ENCODE measurements at regions of chr15 and their contacts with region 1.

Region 1: GRCh38 chr15:68783226-68784058 is 37.3 kb downstream of the ANP32A start:
- DNase-seq: peak; percentile 39 to 79 (median 72)
- ATAC-seq: peak; percentile 90
- H3K4me3 ChIP-seq: no peak overlapping the region
- H3K4me3 Mint-ChIP-seq: no peak overlapping the region
- H3K27ac ChIP-seq: no peak overlapping the region
- H3K27ac Mint-ChIP-seq: peak overlapping the region; percentile 93
- H3K4me1 ChIP-seq: peaks cover 23% of the 10 kb centered on the region
- H3K4me1 Mint-ChIP-seq: peaks cover 34% of the 10 kb centered on the region
- H3K27me3 ChIP-seq: no peaks in the 10 kb centered on the region
- H3K27me3 Mint-ChIP-seq: no peaks in the 10 kb centered on the region
- CTCF ChIP-seq: peak; percentile 77

Region 2: DNA sequence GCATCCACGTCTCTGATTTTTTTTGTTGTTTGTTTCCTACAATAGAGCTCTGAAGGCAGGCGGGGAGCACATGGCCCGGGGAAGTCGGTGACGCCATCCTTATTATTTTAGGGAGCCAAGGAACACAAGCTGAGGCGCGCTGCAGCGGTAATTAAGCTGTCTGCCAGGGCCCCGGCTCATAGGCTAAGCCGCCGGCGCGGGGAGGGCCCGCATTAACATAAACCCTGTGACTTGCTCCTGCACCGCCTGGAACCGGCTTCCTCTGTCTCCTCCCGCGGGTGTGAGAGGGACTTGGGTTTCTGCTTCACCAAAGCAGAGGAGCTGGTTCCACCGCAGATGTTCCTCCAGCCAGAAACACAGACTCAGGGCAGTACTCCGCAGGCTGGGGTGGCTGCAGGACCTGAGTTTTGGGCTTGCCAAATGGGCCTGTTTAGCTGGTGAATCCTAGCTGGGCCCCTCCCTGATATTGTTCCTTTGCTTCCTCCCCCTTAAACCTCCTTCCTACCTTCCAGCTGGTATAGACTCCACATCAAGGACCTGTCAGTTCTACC is 11.9 kb after region 1 on chr15:
- CTCF ChIA-PET with region 1: interaction called, 17 read pairs
- POLR2A ChIA-PET with region 1: interaction called, 3 read pairs
- intact Hi-C with region 1: no loop called
- DNase-seq: peak in 8 of 9 experiments; percentile 33 to 77 (median 66)
- ATAC-seq: peak; percentile 59
- H3K4me3 ChIP-seq: peak overlapping the region; percentile 4 to 10
- H3K4me3 Mint-ChIP-seq: peak overlapping the region; percentile 59
- H3K27ac ChIP-seq: peak overlapping the region; percentile 22 to 59
- H3K27ac Mint-ChIP-seq: peak overlapping the region; percentile 88
- H3K4me1 ChIP-seq: peaks cover 83% of the 10 kb centered on the region
- H3K4me1 Mint-ChIP-seq: peaks cover 96% of the 10 kb centered on the region
- H3K27me3 ChIP-seq: no peaks in the 10 kb centered on the region
- H3K27me3 Mint-ChIP-seq: no peaks in the 10 kb centered on the region
- CTCF ChIP-seq: no peak

Region 3: DNA sequence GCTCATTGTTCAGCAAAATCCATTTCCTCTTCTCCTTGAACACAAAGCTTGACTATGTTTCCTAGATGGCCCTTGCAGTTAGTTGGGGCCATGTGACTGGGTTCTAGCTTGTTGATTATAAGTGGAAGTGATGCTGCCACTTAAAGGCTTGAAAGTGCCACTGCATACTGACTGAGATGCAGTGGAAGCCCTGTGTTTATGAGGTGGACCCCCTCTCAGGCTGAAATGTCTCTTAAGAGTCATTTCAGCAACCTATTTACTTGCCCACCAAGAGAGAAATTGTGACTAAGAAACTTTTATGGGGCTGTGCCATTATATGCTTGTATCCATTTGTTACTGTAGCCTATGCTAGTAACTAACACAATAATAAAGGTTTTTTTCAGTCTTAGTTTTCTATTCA is 45.6 kb after region 1 on chr15:
- CTCF ChIA-PET with region 1: interaction called, 42 read pairs
- POLR2A ChIA-PET with region 1: interaction called, 3 read pairs
- intact Hi-C with region 1: loop called (anchors 1 kb)
- DNase-seq: peak in 5 of 9 experiments; percentile 21 to 72 (median 31)
- ATAC-seq: peak; percentile 89
- H3K4me3 ChIP-seq: no peak overlapping the region
- H3K4me3 Mint-ChIP-seq: no peak overlapping the region
- H3K27ac ChIP-seq: no peak overlapping the region
- H3K27ac Mint-ChIP-seq: no peak overlapping the region
- H3K4me1 ChIP-seq: peaks cover 6% of the 10 kb centered on the region
- H3K4me1 Mint-ChIP-seq: peaks cover 12% of the 10 kb centered on the region
- H3K27me3 ChIP-seq: no peaks in the 10 kb centered on the region
- H3K27me3 Mint-ChIP-seq: peaks cover 4% of the 10 kb centered on the region
- CTCF ChIP-seq: peak; percentile 63

Region 4: DNA sequence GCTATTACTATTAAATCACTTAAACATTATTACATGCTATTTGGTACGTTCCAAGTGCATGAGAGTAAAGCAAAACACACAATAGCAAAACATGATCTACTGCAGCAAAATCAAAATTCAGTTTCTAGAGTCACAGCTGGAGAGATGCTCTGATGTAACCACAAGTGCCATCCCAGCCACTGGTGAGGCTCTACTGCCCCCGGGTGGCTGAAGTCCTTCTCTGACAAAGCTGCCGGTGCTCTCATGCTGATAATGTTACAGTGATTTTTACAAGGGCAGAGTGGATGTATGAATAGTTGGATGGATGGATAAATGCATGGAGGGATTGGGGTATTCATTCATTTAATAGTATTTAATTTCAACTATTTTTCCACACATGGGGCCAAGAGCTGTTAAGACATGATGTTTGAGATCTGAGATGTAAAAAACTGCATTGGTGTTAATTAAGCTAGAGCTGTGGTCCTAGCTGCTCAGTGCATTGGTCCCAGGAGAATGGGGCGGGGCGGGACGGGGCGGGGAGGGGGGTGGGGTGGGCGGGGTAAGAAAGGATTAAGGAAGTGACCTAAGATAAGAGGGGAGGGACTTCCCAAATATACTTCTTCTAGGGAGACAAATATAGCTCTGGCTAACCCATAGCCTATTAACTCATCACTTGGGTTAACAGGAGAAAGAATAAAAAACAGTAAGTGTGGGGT is 141.6 kb after region 1 on chr15:
- CTCF ChIA-PET with region 1: interaction called, 3 read pairs
- POLR2A ChIA-PET with region 1: no interaction called
- intact Hi-C with region 1: loop called in 1 of 2 experiments (anchors 2 kb)
- DNase-seq: peak; percentile 16 to 64 (median 56)
- ATAC-seq: no peak
- H3K4me3 ChIP-seq: no peak overlapping the region
- H3K4me3 Mint-ChIP-seq: no peak overlapping the region
- H3K27ac ChIP-seq: no peak overlapping the region
- H3K27ac Mint-ChIP-seq: no peak overlapping the region
- H3K4me1 ChIP-seq: no peaks in the 10 kb centered on the region
- H3K4me1 Mint-ChIP-seq: no peaks in the 10 kb centered on the region
- H3K27me3 ChIP-seq: no peaks in the 10 kb centered on the region
- H3K27me3 Mint-ChIP-seq: peaks cover 15% of the 10 kb centered on the region
- CTCF ChIP-seq: peak; percentile 62